ENCODE measurements at regions of chr17 and their contacts with region 1.

Region 1: GRCh38 chr17:12579288-12579687 is 86.4 kb upstream of the MYOCD start:
- DNase-seq: no peak
- H3K4me3 ChIP-seq: no peak overlapping the region
- H3K27ac ChIP-seq: no peak overlapping the region
- H3K4me1 ChIP-seq: no peaks in the 10 kb centered on the region
- H3K27me3 ChIP-seq: no peaks in the 10 kb centered on the region
- CTCF ChIP-seq: no peak

Region 2: DNA sequence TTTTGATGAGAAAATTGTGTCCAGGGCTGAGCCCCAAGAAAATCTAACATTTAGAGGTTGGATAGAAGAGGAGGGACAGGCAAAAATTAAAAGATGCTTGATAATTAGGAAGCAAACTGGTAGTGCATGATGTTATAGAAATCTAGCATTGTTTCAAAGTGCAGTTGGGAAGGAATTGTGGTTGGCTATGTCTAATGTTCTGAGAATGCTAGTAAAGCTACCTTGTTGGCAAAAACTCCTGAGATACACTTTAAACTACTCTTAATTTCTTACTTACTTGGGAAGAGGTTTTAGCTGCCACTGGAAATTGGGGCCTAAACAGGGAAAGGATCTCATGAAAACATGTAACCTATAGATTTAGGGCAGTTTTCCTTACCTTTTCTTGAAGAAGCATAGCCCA is 510.3 kb before region 1 on chr17:
- CTCF ChIA-PET with region 1: no interaction called
- POLR2A ChIA-PET with region 1: no interaction called
- intact Hi-C with region 1: no loop called
- DNase-seq: no peak
- H3K4me3 ChIP-seq: no peak overlapping the region
- H3K27ac ChIP-seq: no peak overlapping the region
- H3K4me1 ChIP-seq: no peaks in the 10 kb centered on the region
- H3K27me3 ChIP-seq: no peaks in the 10 kb centered on the region
- CTCF ChIP-seq: no peak

Region 3: DNA sequence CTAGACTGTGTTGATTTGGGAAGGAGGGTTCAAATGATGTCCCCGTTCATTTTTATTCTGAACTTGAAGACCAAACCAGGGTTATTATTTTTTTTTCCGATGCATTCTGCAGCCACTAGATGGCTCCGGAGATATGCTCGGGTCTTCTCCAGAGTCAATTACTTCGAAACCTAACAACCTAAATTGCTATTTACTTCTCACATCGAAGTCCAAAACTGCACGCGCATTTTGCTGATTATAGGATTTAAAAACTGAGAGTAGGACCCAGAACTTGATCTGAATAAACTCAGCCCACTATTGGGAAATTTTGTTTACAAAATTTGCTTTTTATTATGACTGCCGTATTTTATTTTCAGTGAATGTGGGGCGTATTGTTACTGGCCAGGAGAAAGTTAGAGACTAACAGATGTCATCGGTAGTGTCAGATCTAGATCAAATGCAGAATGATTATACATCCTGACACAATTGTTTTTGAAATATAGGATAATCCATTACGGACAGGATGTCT is 758.6 kb after region 1 on chr17:
- CTCF ChIA-PET with region 1: no interaction called
- POLR2A ChIA-PET with region 1: interaction called, 10 read pairs
- intact Hi-C with region 1: no loop called
- DNase-seq: peak in 1 of 2 experiments; percentile 3
- H3K4me3 ChIP-seq: no peak overlapping the region
- H3K27ac ChIP-seq: no peak overlapping the region
- H3K4me1 ChIP-seq: no peaks in the 10 kb centered on the region
- H3K27me3 ChIP-seq: no peaks in the 10 kb centered on the region
- CTCF ChIP-seq: peak; percentile 63

Measured in PC-9 (cell line).